T-cell (primary cell): ENCODE measurements at regions of chr5 and their contacts with region 1.

Region 1: GRCh38 chr5:134140530-134141201 is 26.2 kb downstream of the TCF7 start:
- DNase-seq: peak in 29 of 35 experiments; percentile 36 to 80 (median 53)
- ATAC-seq: peak; percentile 31 to 43 (median 37)
- H3K4me3 ChIP-seq: no peak overlapping the region
- H3K4me3 Mint-ChIP-seq: peak overlapping the region in 1 of 3 donors; percentile 23
- H3K27ac ChIP-seq: peak overlapping the region; percentile 95
- H3K27ac Mint-ChIP-seq: peak overlapping the region; percentile 92 to 97
- H3K4me1 ChIP-seq: peaks cover 28 to 76% of the 10 kb centered on the region in 2 experiments
- H3K4me1 Mint-ChIP-seq: peaks cover 71 to 83% (median 74%) of the 10 kb centered on the region in 3 donors
- H3K27me3 ChIP-seq: no peaks in the 10 kb centered on the region
- H3K27me3 Mint-ChIP-seq: no peaks in the 10 kb centered on the region

Region 2: DNA sequence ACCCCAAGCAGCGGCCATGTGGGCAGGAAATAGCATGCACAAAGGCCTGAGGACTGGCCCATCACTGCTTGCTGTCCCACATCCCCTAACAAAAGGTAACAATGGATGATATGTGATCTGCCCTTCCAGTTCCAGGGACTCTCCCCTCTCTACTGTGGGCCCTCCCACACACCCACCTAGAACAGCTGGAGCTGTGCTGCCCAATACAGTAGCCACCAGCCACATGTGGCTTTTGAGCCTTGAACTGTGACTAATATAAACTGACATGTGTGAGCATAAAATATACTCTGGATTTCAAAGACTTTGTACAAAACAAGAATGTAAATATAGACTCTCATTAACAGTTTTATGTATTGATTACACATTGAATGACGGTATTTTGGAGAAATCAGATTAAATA is 250.3 kb before region 1 on chr5:
- CTCF ChIA-PET with region 1: no interaction called
- POLR2A ChIA-PET with region 1: no interaction called
- DNase-seq: no peak
- ATAC-seq: no peak
- H3K4me3 ChIP-seq: no peak overlapping the region
- H3K4me3 Mint-ChIP-seq: no peak overlapping the region
- H3K27ac ChIP-seq: no peak overlapping the region
- H3K27ac Mint-ChIP-seq: no peak overlapping the region
- H3K4me1 ChIP-seq: no peaks in the 10 kb centered on the region
- H3K4me1 Mint-ChIP-seq: no peaks in the 10 kb centered on the region
- H3K27me3 ChIP-seq: peaks cover 0 to 10% of the 10 kb centered on the region in 2 experiments
- H3K27me3 Mint-ChIP-seq: peaks cover 6 to 7% of the 10 kb centered on the region in 2 donors

Region 3: DNA sequence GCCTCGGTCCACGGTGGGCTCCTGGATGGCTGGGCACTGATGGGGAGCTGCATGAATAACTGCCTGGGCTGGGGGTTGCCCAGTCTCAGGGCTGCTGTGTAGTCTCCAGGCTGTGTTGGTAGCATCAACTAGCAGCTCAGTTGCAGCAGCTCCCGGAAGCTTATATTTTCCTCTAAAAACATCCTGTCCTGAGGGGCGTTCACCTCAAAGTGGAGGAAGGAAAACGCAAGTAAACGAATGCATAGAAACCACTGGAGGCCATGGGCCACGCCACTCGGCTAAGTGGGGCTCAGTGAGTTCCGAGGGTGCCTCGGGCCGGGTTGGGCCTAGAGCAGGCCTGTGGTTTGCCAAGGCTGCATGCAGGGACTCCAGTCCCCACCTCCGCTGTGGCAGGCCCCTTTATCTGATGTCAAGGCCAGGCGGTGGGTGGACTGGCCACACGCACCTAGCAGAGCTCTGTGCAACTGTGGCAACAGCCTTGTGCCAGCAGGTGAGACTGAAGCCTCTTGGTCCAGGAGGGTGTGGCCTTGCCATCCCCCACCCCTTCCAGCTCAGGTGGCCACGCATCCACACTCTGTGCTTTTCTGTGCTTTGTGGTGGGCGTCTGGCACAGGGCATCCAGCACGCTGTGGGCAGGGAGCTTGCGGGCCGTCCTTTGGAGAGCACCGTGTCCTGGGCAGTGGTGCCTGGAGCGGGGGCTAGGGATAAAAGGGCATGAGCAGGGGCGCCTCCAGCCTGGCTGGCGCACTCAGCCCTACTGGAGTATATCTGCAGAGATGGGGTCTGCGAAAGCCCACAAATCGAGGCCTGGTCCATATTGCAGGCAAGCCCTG is 11.0 kb before region 1 on chr5:
- CTCF ChIA-PET with region 1: interaction called, 6 to 11 read pairs
- POLR2A ChIA-PET with region 1: interaction called in 1 of 2 experiments, 4 read pairs
- DNase-seq: peak in 19 of 35 experiments; percentile 37 to 73 (median 45)
- ATAC-seq: peak; percentile 7 to 36 (median 17)
- H3K4me3 ChIP-seq: peak overlapping the region; percentile 65 to 91
- H3K4me3 Mint-ChIP-seq: peak overlapping the region; percentile 88 to 99 (median 92)
- H3K27ac ChIP-seq: peak overlapping the region; percentile 95
- H3K27ac Mint-ChIP-seq: peak overlapping the region; percentile 92 to 97
- H3K4me1 ChIP-seq: peaks cover 84 to 100% of the 10 kb centered on the region in 2 experiments
- H3K4me1 Mint-ChIP-seq: peaks cover 98 to 100% (median 100%) of the 10 kb centered on the region in 3 donors
- H3K27me3 ChIP-seq: no peaks in the 10 kb centered on the region
- H3K27me3 Mint-ChIP-seq: no peaks in the 10 kb centered on the region

Region 4: DNA sequence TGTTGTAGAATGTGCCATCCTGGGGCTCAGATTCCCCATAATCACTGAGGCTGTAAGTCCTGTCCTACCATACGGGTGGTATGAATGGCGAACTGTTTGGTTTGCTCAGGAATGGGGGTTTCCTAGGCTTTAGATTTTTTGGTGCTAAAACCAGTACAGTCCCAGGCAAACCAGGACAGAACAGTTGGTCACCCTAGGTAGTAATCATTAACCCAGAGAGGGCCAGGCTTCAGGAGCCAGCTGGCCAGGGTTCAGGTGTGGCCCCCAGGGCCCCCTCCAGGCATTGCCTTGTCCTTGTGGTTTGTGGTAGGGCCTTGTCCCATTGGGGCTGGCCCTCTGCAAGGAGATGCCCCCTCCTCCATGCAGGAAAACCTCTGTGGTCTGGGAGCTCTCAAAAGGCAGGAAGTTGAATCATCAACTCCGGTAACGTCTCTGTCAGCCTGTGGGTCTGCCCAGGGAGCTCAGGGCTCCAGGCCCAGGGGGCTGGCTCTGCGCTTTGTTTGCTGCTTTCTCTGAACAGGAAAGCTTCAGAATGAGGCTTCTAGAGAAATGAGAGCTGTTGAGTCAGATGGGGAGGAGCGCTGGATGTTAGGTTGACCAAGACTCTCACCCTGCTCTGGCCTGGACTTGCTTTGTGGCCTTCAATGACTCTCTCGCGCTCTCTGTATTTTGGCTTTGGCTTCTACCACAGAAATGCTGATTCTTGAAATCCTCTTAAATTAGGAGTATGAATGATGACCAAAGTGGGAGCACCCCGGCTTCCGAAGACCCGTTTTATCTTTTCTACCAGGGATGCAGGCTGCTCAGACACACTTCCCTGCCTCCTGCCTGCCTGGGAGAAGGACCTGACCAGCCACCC is 362.7 kb after region 1 on chr5:
- CTCF ChIA-PET with region 1: no interaction called
- POLR2A ChIA-PET with region 1: no interaction called
- DNase-seq: peak in 29 of 35 experiments; percentile 6 to 66 (median 23)
- ATAC-seq: peak; percentile 83 to 97 (median 94)
- H3K4me3 ChIP-seq: peak overlapping the region in 1 of 2 donors; percentile 7
- H3K4me3 Mint-ChIP-seq: peak overlapping the region; percentile 31 to 64 (median 39)
- H3K27ac ChIP-seq: peak overlapping the region; percentile 70
- H3K27ac Mint-ChIP-seq: peak overlapping the region; percentile 92 to 93
- H3K4me1 ChIP-seq: peaks cover 12 to 26% of the 10 kb centered on the region in 2 experiments
- H3K4me1 Mint-ChIP-seq: peaks cover 22 to 32% (median 25%) of the 10 kb centered on the region in 3 donors
- H3K27me3 ChIP-seq: no peaks in the 10 kb centered on the region
- H3K27me3 Mint-ChIP-seq: no peaks in the 10 kb centered on the region